Mammary epithelial cell (primary cell): ENCODE measurements at regions of chr2 and their contacts with region 1.

Region 1: GRCh38 chr2:85302121-85302520 is 25.7 kb downstream of the TGOLN2 start:
- DNase-seq: no peak
- H3K4me3 ChIP-seq: no peak overlapping the region
- H3K27ac ChIP-seq: no peak overlapping the region
- H3K4me1 ChIP-seq: peaks cover 5% of the 10 kb centered on the region
- H3K27me3 ChIP-seq: no peaks in the 10 kb centered on the region
- CTCF ChIP-seq: no peak

Region 2: DNA sequence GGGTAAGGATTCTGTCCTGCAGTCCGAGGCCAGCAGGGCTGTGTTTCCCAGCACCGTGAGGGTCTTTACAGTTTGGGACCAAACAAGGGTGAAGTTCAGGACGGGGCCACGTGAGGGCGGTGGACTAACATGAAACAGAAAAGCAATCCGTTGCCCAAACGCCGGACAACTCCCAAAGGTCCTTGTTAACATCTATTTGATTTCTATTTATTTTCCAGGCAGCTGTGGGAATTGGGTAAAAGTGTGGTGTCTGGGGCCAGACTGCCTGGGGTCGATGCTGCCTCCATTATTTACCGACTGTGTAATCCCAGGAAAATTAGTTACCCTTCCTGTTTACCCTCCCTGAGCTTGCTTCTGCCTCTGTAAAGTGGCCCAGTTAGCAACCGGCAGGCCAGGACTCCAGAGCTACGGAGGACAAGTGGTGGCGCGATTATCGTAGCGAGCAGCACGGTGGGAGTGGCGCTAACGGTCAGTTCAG is 235.2 kb before region 1 on chr2:
- CTCF ChIA-PET with region 1: interaction called, 4 read pairs
- dilution Hi-C with region 1: loop called (anchors 25 kb)
- in situ Hi-C with region 1: no loop called
- intact Hi-C with region 1: loop called (anchors 1 kb)
- DNase-seq: peak; percentile 40
- H3K4me3 ChIP-seq: no peak overlapping the region
- H3K27ac ChIP-seq: no peak overlapping the region
- H3K4me1 ChIP-seq: peaks cover 5% of the 10 kb centered on the region
- H3K27me3 ChIP-seq: no peaks in the 10 kb centered on the region
- CTCF ChIP-seq: peak; percentile 74 to 88

Region 3: DNA sequence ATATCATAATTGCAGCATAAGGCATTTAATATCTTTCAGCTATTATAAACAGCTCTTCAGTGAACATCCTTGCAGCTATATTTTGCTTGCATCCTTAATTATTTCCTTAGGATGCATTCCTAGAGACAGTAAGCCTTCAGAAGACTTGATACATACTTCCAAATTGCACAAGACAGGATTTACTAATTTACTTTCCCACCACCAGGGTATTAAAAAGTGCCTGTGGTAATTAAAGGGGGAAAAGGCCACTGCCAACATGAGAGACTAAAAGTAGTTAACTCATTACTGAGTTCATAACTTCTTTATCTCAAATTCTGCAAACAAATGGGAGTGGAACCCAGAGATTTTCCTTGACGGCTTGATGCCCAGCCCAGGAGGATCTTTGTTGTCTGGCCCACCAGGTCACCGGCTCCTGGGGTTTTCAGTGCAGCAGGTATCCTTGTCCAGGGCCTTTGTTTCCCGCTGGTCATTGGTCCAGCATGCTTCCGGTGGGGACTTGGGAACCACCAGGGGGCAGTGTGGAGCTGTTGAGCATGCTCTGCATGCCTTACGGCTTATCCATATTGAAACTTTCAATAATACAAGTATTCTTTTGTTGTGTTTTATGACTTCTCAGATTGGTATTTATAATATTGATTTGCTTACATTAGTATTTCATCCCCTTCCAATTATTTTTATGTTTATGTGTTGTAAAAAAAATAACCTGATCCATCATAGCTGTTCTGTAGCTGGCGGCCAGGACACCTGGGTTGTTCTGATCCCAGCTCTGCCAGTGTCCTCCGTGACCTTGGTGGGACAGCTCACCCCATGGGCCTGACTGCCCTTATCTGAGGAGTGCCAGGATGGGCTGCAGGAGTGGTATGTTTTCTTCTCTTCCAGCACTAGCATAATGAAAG is 35.7 kb before region 1 on chr2:
- CTCF ChIA-PET with region 1: interaction called, 6 read pairs
- dilution Hi-C with region 1: no loop called
- in situ Hi-C with region 1: no loop called
- intact Hi-C with region 1: loop called (anchors 1 kb)
- DNase-seq: peak; percentile 33
- H3K4me3 ChIP-seq: no peak overlapping the region
- H3K27ac ChIP-seq: no peak overlapping the region
- H3K4me1 ChIP-seq: peaks cover 28% of the 10 kb centered on the region
- H3K27me3 ChIP-seq: no peaks in the 10 kb centered on the region
- CTCF ChIP-seq: peak; percentile 88 to 95

Region 4: DNA sequence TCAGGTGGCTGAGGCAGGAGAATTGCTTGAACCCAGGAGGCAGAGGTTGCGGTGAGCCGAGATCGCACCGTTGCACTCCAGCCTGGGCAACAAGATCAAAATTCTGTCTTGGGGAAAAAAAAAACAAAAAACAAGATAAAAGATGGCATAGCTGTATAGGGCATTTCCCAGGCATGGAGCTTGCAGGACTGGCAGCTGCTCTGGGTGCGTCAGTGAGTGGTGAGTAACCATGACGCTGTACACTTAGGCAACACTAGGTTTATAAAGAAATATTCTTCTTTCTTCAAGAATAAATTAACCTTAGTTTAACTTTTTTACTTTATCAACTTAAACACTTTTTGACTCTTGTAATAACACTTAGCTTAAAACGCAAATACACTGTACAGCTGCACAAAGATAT is 10.3 kb after region 1 on chr2:
- CTCF ChIA-PET with region 1: interaction called, 18 read pairs
- dilution Hi-C with region 1: no loop called
- in situ Hi-C with region 1: no loop called
- intact Hi-C with region 1: no loop called
- DNase-seq: peak; percentile 76
- H3K4me3 ChIP-seq: no peak overlapping the region
- H3K27ac ChIP-seq: no peak overlapping the region
- H3K4me1 ChIP-seq: no peaks in the 10 kb centered on the region
- H3K27me3 ChIP-seq: no peaks in the 10 kb centered on the region
- CTCF ChIP-seq: no peak